Right lobe of liver (tissue), 6 donors: ENCODE measurements at regions of chr10 and their contacts with region 1.

Region 1: DNA sequence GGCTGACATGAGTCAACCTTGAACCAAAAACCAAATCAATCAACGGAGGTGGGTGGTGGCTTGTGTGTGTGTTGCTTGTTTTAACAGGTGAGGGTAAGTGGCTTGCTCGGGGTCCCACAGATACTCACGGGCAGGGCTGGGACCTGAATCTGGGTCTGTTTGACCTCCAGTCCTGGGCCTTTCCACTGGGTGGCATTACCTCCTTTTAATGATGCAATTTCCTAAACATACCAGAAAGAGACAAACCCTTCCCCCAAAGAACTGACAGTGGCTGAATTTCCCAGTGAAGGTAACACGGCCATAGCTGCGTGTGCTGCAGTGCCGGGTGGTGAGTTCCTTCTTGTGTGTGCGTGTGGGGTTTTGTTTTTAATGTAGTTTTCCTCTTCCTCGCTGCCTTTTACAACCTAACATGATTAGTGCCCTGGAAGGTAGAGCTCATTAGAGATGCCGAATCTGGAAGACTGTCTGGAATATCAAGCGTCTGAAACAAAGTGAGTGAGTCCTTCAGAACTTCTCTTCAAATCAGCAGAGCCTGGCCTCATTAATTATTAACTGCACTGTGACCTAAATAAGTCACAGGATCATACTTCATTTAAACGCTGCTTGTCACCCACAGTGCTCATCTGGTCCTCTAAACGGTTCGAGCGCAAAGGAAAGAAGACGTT is 166.1 kb upstream of the TCERG1L start:
- DNase-seq: peak in 1 of 3 donors; percentile 67
- ATAC-seq: peak; percentile 85 to 92 (median 91)
- H3K4me3 ChIP-seq: peak overlapping the region; percentile 22 to 42 (median 39)
- H3K27ac ChIP-seq: peak overlapping the region; percentile 71 to 86 (median 77)
- H3K4me1 ChIP-seq: peaks cover 0 to 10% (median 3%) of the 10 kb centered on the region in 4 donors
- H3K27me3 ChIP-seq: no peaks in the 10 kb centered on the region
- CTCF ChIP-seq: peak; percentile 24 to 54 (median 44)
- POLR2A ChIP-seq: peak; percentile 88

Region 2: GRCh38 chr10:131546086-131546810 is 68.7 kb after region 1 on chr10:
- intact Hi-C with region 1: no loop called
- DNase-seq: no peak
- ATAC-seq: peak in 1 of 4 donors; percentile 40
- H3K4me3 ChIP-seq: no peak overlapping the region
- H3K27ac ChIP-seq: no peak overlapping the region
- H3K4me1 ChIP-seq: no peaks in the 10 kb centered on the region
- H3K27me3 ChIP-seq: no peaks in the 10 kb centered on the region
- CTCF ChIP-seq: no peak
- POLR2A ChIP-seq: no peak

Region 3: GRCh38 chr10:131819241-131820072 is 341.9 kb after region 1 on chr10:
- intact Hi-C with region 1: loop called in 1 of 2 experiments (anchors 10 kb)
- DNase-seq: peak in 2 of 3 donors; percentile 66 to 89
- ATAC-seq: peak; percentile 65 to 84 (median 74)
- H3K4me3 ChIP-seq: no peak overlapping the region
- H3K27ac ChIP-seq: peak overlapping the region in 2 of 3 donors; percentile 36 to 48
- H3K4me1 ChIP-seq: peaks cover 0 to 65% (median 20%) of the 10 kb centered on the region in 4 donors
- H3K27me3 ChIP-seq: no peaks in the 10 kb centered on the region
- CTCF ChIP-seq: no peak
- POLR2A ChIP-seq: no peak